ENCODE measurements at regions of chr4 and their contacts with region 1.

Region 1: DNA sequence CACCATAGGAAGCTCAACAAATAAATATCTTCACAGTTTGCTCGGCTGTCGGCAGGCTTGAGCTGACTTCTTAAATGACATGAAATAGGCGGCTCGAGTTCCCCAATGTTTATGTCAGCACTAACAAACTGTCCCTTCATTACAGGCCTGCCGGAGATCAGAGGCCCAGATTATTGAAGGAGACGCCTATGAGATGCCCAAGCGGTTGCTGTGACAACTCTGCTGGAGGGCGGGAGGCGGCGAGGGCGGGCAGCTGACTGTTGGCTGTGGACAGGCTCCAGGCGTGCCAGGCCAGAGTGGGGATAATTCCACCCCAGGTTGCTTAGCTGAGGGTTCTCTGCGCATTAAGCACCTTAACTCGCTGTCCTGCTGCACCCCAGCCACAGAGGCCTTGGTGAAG is 39.2 kb upstream of the MSX1 start:
- DNase-seq: no peak
- H3K4me3 ChIP-seq: no peak overlapping the region
- H3K27me3 ChIP-seq: peaks cover 4% of the 10 kb centered on the region; the same call in 1 of the 2 replicates
- CTCF ChIP-seq: no peak

Region 2: DNA sequence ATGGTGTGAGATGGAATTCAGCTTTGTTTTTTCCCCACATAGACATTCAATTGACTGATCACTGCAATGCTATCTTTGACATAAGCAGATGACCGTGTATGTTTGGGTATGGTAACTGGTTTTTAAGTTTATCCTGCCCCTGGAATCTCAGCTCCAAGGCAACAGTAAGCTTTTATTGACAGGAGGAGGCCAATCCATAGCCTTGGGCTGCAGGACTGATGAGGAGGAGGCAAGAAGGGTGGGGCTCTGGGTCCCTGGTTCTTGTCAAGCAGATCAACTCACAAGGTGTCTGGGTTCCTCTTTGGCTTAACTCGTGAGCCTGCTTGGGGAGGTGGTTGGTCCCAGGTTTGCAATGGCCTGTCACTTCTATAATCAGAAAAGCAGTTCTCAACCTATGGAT is 165.3 kb before region 1 on chr4:
- CTCF ChIA-PET with region 1: no interaction called
- POLR2A ChIA-PET with region 1: interaction called, 14 read pairs
- DNase-seq: no peak
- H3K4me3 ChIP-seq: no peak overlapping the region
- H3K27me3 ChIP-seq: no peaks in the 10 kb centered on the region
- CTCF ChIP-seq: no peak

Region 3: DNA sequence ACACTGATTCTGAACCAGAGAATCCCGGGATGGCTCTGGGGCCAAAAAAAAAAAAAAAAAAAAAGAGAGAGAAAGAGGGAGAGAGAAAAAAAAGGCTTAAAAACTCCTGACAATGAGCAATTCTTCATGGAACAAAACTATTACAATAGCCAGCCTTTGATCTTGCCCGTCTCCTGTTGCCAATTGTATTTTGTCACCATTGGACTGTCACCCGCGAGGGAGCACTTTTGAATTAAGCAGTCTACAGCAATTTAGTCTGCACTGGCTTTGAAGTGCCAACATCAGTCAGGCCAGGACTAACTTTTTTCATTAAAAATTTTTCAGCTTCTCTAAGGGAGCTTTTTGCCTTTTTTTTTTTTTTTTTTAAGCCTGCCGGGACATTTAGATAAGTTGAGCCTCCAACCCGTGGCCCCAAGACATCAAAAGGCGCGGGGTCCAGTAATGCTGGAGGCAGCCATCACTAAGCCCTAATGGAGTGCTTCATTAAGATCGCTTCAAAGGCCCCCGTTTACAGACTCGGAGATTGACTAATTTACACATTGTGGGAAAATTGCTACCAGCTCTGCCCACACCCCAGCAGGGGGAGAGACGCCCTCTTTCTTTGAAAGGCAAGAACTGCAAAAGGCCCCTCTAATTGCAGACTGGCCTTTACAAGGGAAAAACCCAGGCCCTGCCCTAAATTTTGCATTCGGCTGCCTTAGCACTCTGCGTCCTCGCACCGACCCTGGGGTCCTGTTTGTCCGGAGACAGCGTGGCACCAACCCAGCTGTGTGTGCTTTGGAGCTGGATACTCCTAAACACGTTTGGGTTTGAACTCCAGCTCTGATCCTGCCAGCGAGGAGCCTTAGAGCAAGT is 58.9 kb before region 1 on chr4:
- CTCF ChIA-PET with region 1: no interaction called
- POLR2A ChIA-PET with region 1: no interaction called
- DNase-seq: no peak
- H3K4me3 ChIP-seq: no peak overlapping the region
- H3K27me3 ChIP-seq: peaks cover 10% of the 10 kb centered on the region
- CTCF ChIP-seq: peak; percentile 27

Region 4: DNA sequence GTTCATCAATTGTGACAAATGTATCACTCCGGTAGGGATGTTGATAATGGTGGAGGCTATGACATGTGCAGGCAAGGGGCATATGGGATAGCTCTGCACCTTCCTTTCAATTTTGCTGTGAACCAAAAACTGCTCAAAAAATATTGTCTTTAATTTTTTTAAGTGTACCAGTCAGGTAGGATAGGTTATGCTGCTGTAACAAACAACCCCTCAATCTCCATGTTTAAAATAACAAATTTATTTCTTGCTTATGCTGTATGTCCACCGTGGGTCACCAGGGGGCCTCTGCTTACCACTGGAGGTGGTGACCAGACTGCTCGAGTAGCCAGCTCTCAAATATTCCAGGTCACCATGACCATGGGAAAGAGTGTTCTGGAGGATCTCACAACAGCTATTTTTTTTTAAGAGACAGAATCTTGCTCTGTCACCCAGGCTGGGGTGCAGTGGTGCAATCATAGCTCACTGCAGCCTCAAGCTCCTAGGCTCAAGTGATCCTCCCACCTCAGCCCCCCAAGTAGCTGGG is 15.8 kb after region 1 on chr4:
- CTCF ChIA-PET with region 1: no interaction called
- POLR2A ChIA-PET with region 1: no interaction called
- DNase-seq: no peak
- H3K4me3 ChIP-seq: no peak overlapping the region
- H3K27me3 ChIP-seq: peaks cover 2% of the 10 kb centered on the region
- CTCF ChIP-seq: no peak